ENCODE measurements at regions of chr19 and their contacts with region 1.

Region 1: GRCh38 chr19:51026554-51026831 is at the start of gene KLK11:
- DNase-seq: no peak
- H3K4me3 ChIP-seq: no peak within 1 kb of the TSS
- H3K27ac ChIP-seq: no peak within 1 kb of the TSS
- H3K27me3 ChIP-seq: peaks cover 0 to 55% (median 14%) of the 10 kb centered on the region in 45 donors
- CTCF ChIP-seq: no peak
- total RNA-seq, gene KLK11: not detected

Region 2: GRCh38 chr19:51086153-51086850 is 59.8 kb after region 1 on chr19:
- intact Hi-C with region 1: loop called in 1 of 2 experiments (anchors 5 kb)
- DNase-seq: peak in 2 of 10 donors; percentile 16
- H3K4me3 ChIP-seq: no peak overlapping the region
- H3K27ac ChIP-seq: no peak overlapping the region
- H3K27me3 ChIP-seq: no peaks in the 10 kb centered on the region
- CTCF ChIP-seq: no peak

Region 3: GRCh38 chr19:51097166-51097738 is 70.8 kb after region 1 on chr19:
- intact Hi-C with region 1: loop called (anchors 2 kb)
- DNase-seq: peak; percentile 48 to 72 (median 56)
- H3K4me3 ChIP-seq: no peak overlapping the region
- H3K27ac ChIP-seq: no peak overlapping the region
- H3K27me3 ChIP-seq: no peaks in the 10 kb centered on the region
- CTCF ChIP-seq: peak in 55 of 56 donors; percentile 36 to 71 (median 61)

Region 4: DNA sequence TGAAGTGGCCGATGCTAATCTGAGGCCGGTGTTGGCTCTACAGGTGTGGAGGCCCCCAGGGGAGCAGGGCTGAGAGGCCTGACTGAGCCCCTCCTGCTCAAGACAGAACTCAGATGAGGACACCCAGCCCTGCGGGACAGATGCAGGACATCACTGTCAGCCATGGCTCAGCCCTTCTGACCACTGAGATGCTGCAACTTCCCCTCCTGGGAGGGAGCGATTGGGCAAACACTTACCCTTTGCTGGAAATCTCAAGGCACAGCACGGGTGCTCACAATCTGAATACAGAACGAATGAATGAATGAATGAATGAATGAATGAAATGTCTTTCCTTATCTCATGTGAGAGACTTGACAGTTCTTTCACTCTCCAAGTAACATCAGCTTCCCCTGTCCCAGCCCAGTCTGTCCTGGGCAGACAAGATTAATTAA is 112.1 kb after region 1 on chr19:
- intact Hi-C with region 1: no loop called
- DNase-seq: peak in 1 of 10 donors; percentile 24
- H3K4me3 ChIP-seq: no peak overlapping the region
- H3K27ac ChIP-seq: peak overlapping the region in 18 of 59 donors; percentile 6 to 80 (median 48)
- H3K27me3 ChIP-seq: peaks cover 0 to 20% (median 0%) of the 10 kb centered on the region in 45 donors
- CTCF ChIP-seq: no peak